H1 (cell line): ENCODE measurements at regions of chr1 and their contacts with region 1.

Region 1: DNA sequence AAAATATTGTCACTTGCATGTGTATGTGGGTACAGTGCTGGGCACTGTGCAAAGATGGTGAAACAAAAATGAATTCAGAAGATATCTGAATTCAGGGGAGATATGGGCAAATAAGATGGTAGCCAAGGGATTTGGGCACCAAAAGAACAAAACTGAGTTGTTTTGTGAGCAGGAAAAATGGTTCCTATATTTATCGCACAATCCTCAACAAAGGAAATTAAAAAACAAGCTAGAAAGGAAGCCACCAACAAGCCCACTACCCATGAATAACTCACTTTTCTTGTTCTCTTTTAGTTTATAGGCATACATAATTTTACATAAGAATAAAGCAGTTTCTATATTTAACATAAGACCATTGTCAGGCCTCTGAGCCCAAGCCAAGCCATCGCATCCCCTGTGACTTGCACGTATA is 40.7 kb upstream of the VASH2 start:
- DNase-seq: peak in 1 of 2 experiments; percentile 73
- H3K4me3 ChIP-seq: peak overlapping the region in 3 of 4 experiments; percentile 3 to 49 (median 13); a peak in 4 of 8 replicates
- H3K27ac ChIP-seq: peak overlapping the region; percentile 91
- H3K4me1 ChIP-seq: peaks cover 5 to 18% (median 14%) of the 10 kb centered on the region in 4 experiments; a peak in 6 of 7 replicates
- H3K27me3 ChIP-seq: no peaks in the 10 kb centered on the region
- CTCF ChIP-seq: no peak
- EP300 ChIP-seq: no peak
- POLR2A ChIP-seq: peak in 1 of 2 experiments; percentile 44; a peak in 1 of 3 replicates
- RAD21 ChIP-seq: no peak

Region 2: DNA sequence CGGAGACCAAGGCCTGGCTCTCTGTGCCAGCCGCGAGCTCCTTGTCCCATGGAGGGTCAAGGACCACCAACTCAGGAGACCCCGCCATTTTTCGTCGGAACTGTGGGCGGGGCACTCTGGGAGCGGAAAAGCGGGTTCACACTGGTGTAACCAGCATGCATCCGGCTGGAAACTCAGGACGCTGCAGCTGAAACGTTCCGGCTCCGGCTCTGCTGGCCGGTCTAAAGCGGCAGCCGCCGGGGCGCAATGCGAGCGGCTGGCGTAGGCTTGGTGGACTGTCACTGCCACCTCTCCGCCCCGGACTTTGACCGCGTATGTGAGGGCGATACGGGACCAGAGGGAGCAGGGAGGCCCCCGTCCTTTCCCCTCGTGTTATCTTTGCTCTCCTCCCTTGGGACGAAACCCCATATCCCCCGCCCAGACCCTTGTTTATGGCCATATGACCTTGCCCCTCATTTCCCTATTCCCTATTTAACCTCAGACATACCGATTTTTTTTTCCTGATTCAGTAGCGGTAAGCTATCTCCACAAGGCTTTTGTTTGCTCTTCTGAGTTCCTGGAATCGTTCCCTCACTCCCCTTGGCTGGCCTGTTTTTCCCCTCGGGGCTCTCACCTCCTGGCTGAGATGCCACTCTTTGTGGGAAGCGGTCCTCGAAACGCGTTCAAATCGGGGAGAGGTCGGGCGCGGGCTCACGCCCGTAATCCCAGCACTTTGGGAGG is 117.8 kb before region 1 on chr1 and contains the starts of genes NSL1 and TATDN3:
- CTCF ChIA-PET with region 1: no interaction called
- POLR2A ChIA-PET with region 1: interaction called, 10 read pairs
- DNase-seq: peak; percentile 75 to 100
- H3K4me3 ChIP-seq: peak within 1 kb of the TSS; percentile 77 to 99 (median 88)
- H3K27ac ChIP-seq: peak within 1 kb of the TSS; percentile 94
- H3K4me1 ChIP-seq: peaks cover 0 to 4% (median 0%) of the 10 kb centered on the region in 4 experiments; a peak in 3 of 7 replicates
- H3K27me3 ChIP-seq: no peaks in the 10 kb centered on the region
- CTCF ChIP-seq: 0 out of 4 replicates have a peak, but pooled peaks of 1 of the 3 experiments have one; percentile 2
- EP300 ChIP-seq: peak in 1 of 2 experiments; percentile 88; a peak in 1 of 3 replicates
- POLR2A ChIP-seq: peak; percentile 67 to 97
- RAD21 ChIP-seq: peak; percentile 22 to 32; a peak in 3 of 4 replicates
- total RNA-seq, gene NSL1: 48.3 and 51.7 TPM in 2 replicates
- total RNA-seq, gene TATDN3: 15.6 and 19.4 TPM in 2 replicates

Region 3: DNA sequence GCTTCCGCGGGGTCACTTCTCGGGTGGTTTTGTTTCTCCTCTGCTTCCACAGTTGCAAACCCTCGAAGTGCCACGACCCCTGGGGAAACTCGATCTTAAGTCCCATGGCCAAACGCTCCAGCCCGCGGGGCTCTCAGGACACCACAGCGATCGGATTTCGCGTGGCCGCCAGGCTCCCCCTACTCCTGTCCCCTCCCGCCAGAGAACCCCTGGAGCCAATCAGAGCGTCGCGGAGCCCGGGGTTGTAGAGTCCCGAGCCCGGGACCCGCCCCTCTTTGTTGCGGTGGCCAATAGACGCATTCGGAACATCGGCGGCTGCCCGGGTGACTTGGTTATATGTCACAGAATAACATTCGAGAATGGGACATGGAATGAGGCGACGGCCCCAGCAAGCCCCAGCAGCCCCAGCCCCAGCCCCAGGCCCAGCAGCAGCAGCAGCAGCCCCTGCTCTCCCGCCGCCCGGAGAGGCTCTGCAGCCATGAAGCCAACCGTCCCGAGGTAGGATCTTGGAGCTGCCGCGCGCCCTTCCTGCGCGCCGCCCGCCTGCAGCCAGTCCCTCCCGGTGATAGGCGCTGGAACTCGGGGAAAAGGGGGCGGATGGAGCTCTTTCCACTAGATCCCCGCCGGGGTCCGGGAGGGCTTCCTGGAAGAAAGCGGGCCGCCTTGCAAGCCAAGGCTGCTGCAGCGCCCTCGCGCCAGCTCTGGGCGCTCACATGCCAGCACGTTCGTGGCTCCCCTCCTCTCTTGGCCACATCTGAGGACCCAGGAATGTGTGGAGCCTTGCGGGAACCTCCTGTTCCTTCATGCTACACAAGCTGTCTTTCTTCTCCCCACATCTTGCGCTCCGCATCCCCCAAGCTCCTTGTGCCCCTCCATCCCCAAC is 40.8 kb after region 1 on chr1 and contains the start of gene VASH2:
- CTCF ChIA-PET with region 1: interaction called, 3 read pairs
- POLR2A ChIA-PET with region 1: interaction called, 23 read pairs
- DNase-seq: peak; percentile 47 to 89
- H3K4me3 ChIP-seq: peak within 1 kb of the TSS; percentile 55 to 95 (median 94)
- H3K27ac ChIP-seq: no peak within 1 kb of the TSS
- H3K4me1 ChIP-seq: peaks cover 3 to 15% (median 11%) of the 10 kb centered on the region in 4 experiments
- H3K27me3 ChIP-seq: peaks cover 0 to 4% (median 0%) of the 10 kb centered on the region in 4 experiments; a peak in 1 of 7 replicates
- CTCF ChIP-seq: no peak
- EP300 ChIP-seq: no peak
- POLR2A ChIP-seq: peak in 1 of 2 experiments; percentile 31; a peak in 1 of 3 replicates
- RAD21 ChIP-seq: no peak
- total RNA-seq, gene VASH2: 184 and 187 TPM in 2 replicates